ENCODE measurements at regions of chr1 and their contacts with region 1.

Region 1: DNA sequence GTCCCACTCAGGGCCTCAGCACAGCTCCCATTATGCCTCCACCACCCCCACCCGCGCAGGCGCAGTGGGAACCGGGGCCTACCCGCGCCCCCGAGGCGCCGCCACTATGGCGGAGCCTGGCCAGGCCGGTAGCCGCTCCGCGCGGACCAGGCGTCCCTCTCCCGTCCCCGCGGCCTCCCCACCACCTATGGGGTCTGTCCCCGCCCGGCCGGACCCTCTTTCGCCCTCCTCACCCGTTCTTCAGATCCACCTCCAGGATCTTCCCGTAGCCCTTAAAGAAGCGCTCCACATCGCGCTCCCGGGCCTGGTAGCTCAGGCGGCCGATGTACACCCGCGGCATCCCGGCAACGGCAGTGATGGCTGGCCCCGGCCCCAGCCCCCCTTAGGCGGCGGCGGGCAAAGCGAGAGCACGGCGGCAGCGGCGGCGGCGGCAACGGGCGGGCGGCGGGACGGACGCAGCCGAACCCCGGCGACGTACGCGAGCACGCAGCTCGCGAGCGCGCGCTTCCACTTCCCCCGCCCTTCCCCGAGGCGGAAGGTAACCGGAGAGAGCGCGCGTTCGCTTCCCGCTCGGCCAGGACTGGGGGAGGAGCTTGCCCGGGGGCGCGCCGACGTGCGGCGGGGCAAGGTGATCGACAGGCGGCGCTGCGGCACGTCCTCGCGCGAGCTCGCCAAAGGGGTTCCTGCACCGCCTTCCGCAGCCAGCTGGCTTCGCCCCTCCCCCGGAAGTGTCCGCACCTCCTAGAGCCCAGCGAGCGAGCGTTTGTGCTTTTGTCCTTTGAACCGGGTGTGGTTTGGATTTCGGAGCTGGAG is at the start of gene SRSF4:
- DNase-seq: peak; percentile 97 to 99 (median 99)
- ATAC-seq: peak; percentile 89
- H3K4me3 ChIP-seq: peak within 1 kb of the TSS; percentile 79
- H3K4me3 Mint-ChIP-seq: peak within 1 kb of the TSS; percentile 97
- H3K27ac ChIP-seq: peak within 1 kb of the TSS; percentile 97 to 99
- H3K27ac Mint-ChIP-seq: peak within 1 kb of the TSS; percentile 93
- H3K4me1 ChIP-seq: peaks cover 39% of the 10 kb centered on the region
- H3K4me1 Mint-ChIP-seq: peaks cover 50% of the 10 kb centered on the region
- H3K27me3 ChIP-seq: no peaks in the 10 kb centered on the region
- H3K27me3 Mint-ChIP-seq: no peaks in the 10 kb centered on the region
- CTCF ChIP-seq: peak; percentile 72
- total RNA-seq, gene SRSF4: 89.2 to 93.4 TPM

Region 2: DNA sequence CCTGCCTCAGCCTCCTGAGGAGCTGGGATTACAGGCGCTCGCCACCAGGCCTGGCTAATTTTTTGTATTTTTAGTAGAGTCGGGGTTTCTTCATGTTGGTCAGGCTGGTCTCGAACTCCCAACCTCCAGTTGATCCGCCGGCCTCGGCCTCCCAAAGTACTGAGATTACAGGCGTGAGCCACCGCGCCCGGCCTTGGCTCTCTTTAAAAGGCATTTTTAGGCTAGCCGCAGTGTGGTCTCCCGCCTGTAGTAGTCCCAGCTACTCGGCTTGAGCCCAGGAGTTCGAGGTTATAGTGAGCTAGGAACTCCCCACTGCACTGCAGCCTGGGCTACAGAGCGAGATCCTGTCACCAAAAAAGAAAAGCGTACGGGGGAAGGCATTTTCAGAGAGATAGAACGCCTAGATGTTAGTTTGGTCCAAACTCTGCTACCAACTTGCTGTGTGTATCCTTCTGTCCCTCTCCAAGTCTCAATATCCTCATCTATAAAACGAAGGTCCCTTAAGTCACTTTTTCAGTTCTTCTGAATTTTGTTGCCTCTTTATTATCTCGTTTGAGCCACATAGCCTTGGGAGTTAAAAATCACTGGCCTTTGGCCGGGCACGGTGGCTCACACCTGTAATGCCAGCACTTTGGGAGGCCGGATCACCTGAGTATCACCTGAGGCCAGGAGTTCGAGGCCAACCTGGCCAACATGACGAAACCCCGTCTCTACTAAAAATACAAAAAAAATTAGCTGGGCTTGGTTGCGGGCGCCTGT is 852.0 kb before region 1 on chr1:
- CTCF ChIA-PET with region 1: interaction called, 3 read pairs
- POLR2A ChIA-PET with region 1: interaction called, 15 read pairs
- intact Hi-C with region 1: no loop called
- DNase-seq: peak in 10 of 14 experiments; percentile 17 to 73 (median 36)
- ATAC-seq: peak; percentile 21
- H3K4me3 ChIP-seq: peak overlapping the region; percentile 67
- H3K4me3 Mint-ChIP-seq: peak overlapping the region; percentile 94
- H3K27ac ChIP-seq: peak overlapping the region; percentile 90 to 93
- H3K27ac Mint-ChIP-seq: peak overlapping the region; percentile 88
- H3K4me1 ChIP-seq: peaks cover 25% of the 10 kb centered on the region
- H3K4me1 Mint-ChIP-seq: peaks cover 35% of the 10 kb centered on the region
- H3K27me3 ChIP-seq: no peaks in the 10 kb centered on the region
- H3K27me3 Mint-ChIP-seq: no peaks in the 10 kb centered on the region
- CTCF ChIP-seq: no peak

Region 3: GRCh38 chr1:28648474-28649198 is 533.0 kb before region 1 on chr1 and contains the start of gene RNU11:
- CTCF ChIA-PET with region 1: no interaction called
- POLR2A ChIA-PET with region 1: interaction called, 49 read pairs
- intact Hi-C with region 1: loop called (anchors 2 kb)
- DNase-seq: peak; percentile 77 to 97 (median 85)
- ATAC-seq: peak; percentile 67
- H3K4me3 ChIP-seq: peak within 1 kb of the TSS; percentile 50
- H3K4me3 Mint-ChIP-seq: peak within 1 kb of the TSS; percentile 78
- H3K27ac ChIP-seq: peak within 1 kb of the TSS; percentile 88 to 93
- H3K27ac Mint-ChIP-seq: peak within 1 kb of the TSS; percentile 96
- H3K4me1 ChIP-seq: peaks cover 36% of the 10 kb centered on the region
- H3K4me1 Mint-ChIP-seq: peaks cover 32% of the 10 kb centered on the region
- H3K27me3 ChIP-seq: no peaks in the 10 kb centered on the region
- H3K27me3 Mint-ChIP-seq: no peaks in the 10 kb centered on the region
- CTCF ChIP-seq: no peak
- total RNA-seq, gene RNU11: not detected

Region 4: DNA sequence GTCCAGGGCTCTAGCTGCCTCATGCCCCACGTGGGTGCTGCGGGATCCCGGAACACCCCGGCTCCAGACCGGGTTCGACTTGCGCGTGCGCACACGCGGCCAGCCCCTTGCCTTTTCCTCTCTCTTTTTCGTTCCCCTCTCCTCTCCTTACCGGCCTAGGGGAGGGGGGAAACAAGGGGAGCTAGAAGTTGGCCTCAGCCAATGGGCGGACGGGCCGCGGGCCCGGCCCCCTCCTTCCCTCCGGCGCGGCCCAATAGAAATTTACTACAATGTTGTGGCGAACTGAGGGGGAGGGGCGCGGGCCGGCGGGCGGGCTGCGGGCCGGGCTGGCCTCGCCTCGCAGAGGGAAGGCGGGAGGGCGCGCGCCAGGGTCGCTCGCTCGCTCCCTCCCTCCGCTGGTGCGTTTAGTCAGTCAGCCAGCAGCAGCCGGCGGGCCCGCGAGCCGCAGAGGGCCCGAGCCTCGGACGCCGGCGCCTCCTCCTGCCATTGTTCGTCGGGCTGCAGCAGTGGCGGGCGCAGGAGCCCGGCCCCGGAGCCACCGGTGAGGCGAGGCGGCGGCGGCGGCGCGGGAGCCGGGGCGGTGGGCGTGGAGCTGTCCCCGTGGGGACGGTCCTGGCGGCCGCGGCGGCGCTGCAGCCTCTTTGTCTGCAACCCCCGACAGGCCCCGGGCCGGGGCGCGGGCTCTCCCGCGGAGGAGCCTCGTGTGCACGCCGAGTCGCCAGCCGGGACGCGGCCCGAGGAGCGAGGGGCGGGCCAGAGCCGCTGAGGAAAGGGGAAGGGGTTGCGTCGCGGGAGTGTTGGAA is 267.2 kb before region 1 on chr1 and contains the start of gene EPB41:
- CTCF ChIA-PET with region 1: no interaction called
- POLR2A ChIA-PET with region 1: interaction called, 22 read pairs
- intact Hi-C with region 1: no loop called
- DNase-seq: peak; percentile 79 to 97 (median 93)
- ATAC-seq: peak; percentile 76
- H3K4me3 ChIP-seq: peak within 1 kb of the TSS; percentile 70
- H3K4me3 Mint-ChIP-seq: peak within 1 kb of the TSS; percentile 90
- H3K27ac ChIP-seq: peak within 1 kb of the TSS; percentile 73 to 76
- H3K27ac Mint-ChIP-seq: peak within 1 kb of the TSS; percentile 93
- H3K4me1 ChIP-seq: peaks cover 39% of the 10 kb centered on the region
- H3K4me1 Mint-ChIP-seq: peaks cover 53% of the 10 kb centered on the region
- H3K27me3 ChIP-seq: no peaks in the 10 kb centered on the region
- H3K27me3 Mint-ChIP-seq: no peaks in the 10 kb centered on the region
- CTCF ChIP-seq: no peak
- total RNA-seq, gene EPB41: 138 to 145 TPM

Region 5: GRCh38 chr1:29171089-29171488 is 10.5 kb before region 1 on chr1:
- CTCF ChIA-PET with region 1: interaction called, 5 read pairs
- POLR2A ChIA-PET with region 1: interaction called, 37 read pairs
- intact Hi-C with region 1: no loop called
- DNase-seq: no peak
- ATAC-seq: no peak
- H3K4me3 ChIP-seq: no peak overlapping the region
- H3K4me3 Mint-ChIP-seq: peak overlapping the region; percentile 14
- H3K27ac ChIP-seq: no peak overlapping the region
- H3K27ac Mint-ChIP-seq: peak overlapping the region; percentile 48
- H3K4me1 ChIP-seq: peaks cover 47% of the 10 kb centered on the region
- H3K4me1 Mint-ChIP-seq: peaks cover 67% of the 10 kb centered on the region
- H3K27me3 ChIP-seq: no peaks in the 10 kb centered on the region
- H3K27me3 Mint-ChIP-seq: no peaks in the 10 kb centered on the region
- CTCF ChIP-seq: no peak

Region 6: GRCh38 chr1:29542548-29542947 is 360.9 kb after region 1 on chr1:
- CTCF ChIA-PET with region 1: no interaction called
- POLR2A ChIA-PET with region 1: no interaction called
- intact Hi-C with region 1: no loop called
- DNase-seq: no peak
- ATAC-seq: no peak
- H3K4me3 ChIP-seq: no peak overlapping the region
- H3K4me3 Mint-ChIP-seq: no peak overlapping the region
- H3K27ac ChIP-seq: no peak overlapping the region
- H3K27ac Mint-ChIP-seq: no peak overlapping the region
- H3K4me1 ChIP-seq: no peaks in the 10 kb centered on the region
- H3K4me1 Mint-ChIP-seq: no peaks in the 10 kb centered on the region
- H3K27me3 ChIP-seq: peaks cover 0 to 2% of the 10 kb centered on the region in 2 experiments
- H3K27me3 Mint-ChIP-seq: no peaks in the 10 kb centered on the region
- CTCF ChIP-seq: no peak

Region 7: DNA sequence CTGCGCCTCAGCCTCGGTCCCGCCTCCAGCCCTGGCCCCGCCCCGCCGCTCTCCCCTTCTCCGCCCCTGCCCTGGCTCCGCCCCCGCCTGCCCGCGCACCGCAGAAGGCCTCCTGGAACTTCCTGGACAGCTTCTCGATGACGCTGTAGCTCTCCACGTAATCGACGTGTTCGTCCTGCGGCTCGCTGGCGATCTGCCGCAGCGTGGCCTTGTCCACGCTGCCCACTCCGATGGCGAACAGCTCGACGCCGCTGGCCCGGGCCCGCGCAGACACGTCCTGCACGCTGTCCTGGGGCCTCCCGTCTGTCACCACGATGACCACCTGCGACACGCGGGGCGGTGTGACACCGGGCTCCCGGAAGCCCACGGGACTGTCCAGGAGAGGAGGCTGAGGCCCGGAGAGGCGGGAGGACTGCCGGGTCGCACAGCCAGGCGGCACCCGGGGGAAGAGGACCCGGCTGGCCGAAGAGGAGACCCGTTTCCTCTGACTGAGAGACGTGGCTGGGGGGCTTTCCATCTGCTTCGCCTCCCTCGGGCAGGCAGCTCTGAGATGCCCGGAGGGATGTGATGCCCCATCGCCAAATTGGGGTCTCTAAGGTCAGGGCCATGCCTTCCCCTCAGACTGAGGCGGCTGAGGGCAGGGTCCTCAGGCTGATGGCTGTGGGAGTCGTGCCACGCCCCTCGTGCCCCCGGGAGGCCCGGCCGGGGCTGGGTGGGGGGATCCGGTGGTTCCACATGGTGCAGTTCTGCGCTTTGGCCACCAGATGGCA is 1537.2 kb after region 1 on chr1:
- CTCF ChIA-PET with region 1: no interaction called
- POLR2A ChIA-PET with region 1: interaction called, 10 read pairs
- intact Hi-C with region 1: no loop called
- DNase-seq: peak in 13 of 14 experiments; percentile 71 to 98 (median 78)
- ATAC-seq: peak; percentile 62
- H3K4me3 ChIP-seq: peak overlapping the region; percentile 75
- H3K4me3 Mint-ChIP-seq: peak overlapping the region; percentile 95
- H3K27ac ChIP-seq: peak overlapping the region; percentile 100
- H3K27ac Mint-ChIP-seq: peak overlapping the region; percentile 92
- H3K4me1 ChIP-seq: peaks cover 51% of the 10 kb centered on the region
- H3K4me1 Mint-ChIP-seq: peaks cover 30% of the 10 kb centered on the region
- H3K27me3 ChIP-seq: no peaks in the 10 kb centered on the region
- H3K27me3 Mint-ChIP-seq: no peaks in the 10 kb centered on the region
- CTCF ChIP-seq: peak; percentile 97

Measured in CD4-positive, alpha-beta T cell (primary cell).